Posterior vena cava (tissue), 2 donors: ENCODE measurements at regions of chr18 and their contacts with region 1.

Region 1: GRCh38 chr18:61388010-61388409 is 54.8 kb downstream of the CDH20 start:
- DNase-seq: no peak

Region 2: DNA sequence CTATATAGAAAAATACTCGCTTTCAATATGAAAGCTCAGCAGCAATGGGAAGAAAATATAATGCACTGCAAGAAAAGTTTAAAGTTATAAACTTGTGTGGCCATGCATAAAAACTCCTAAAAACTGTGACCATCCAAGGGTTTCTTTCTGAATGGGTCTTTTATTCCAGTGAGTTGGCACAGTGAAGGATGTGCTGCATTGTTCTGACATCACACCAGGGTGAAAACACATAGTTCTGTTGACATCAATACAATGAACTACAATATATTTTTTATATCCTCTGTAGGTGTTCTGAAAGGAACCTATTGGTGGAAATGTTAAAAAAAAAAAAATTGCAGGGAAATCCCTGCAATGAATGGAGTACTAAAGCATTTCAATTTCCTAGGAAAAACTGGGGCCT is 25.4 kb after region 1 on chr18:
- intact Hi-C with region 1: loop called in 1 of 2 experiments (anchors 1 kb)
- DNase-seq: no peak

Region 3: GRCh38 chr18:61426492-61427053 is 38.6 kb after region 1 on chr18:
- intact Hi-C with region 1: no loop called
- DNase-seq: no peak